Gastrocnemius medialis (tissue), 4 donors: ENCODE measurements at regions of chr11 and their contacts with region 1.

Region 1: GRCh38 chr11:117232092-117232878 is at the start of gene RNF214:
- DNase-seq: peak; percentile 64 to 74
- ATAC-seq: peak; percentile 91
- H3K4me3 ChIP-seq: peak within 1 kb of the TSS; percentile 89 to 100 (median 95)
- H3K27ac ChIP-seq: peak within 1 kb of the TSS; percentile 93 to 99 (median 96)
- H3K4me1 ChIP-seq: peaks cover 25 to 34% of the 10 kb centered on the region in 2 donors
- H3K27me3 ChIP-seq: no peaks in the 10 kb centered on the region
- CTCF ChIP-seq: peak; percentile 75 to 99 (median 99)
- POLR2A ChIP-seq: peak; percentile 93 to 95
- total RNA-seq, gene RNF214: 17.1 to 22.7 (median 19.9) TPM

Region 2: GRCh38 chr11:116772443-116773202 is 459.7 kb before region 1 on chr11 and contains the start of gene BUD13:
- in situ Hi-C with region 1: no loop called
- intact Hi-C with region 1: loop called (anchors 1 kb)
- DNase-seq: peak; percentile 80 to 84
- ATAC-seq: peak; percentile 90 to 95
- H3K4me3 ChIP-seq: peak within 1 kb of the TSS; percentile 71 to 98 (median 89)
- H3K27ac ChIP-seq: peak within 1 kb of the TSS; percentile 91 to 96 (median 95)
- H3K4me1 ChIP-seq: peaks cover 21 to 24% of the 10 kb centered on the region in 2 donors
- H3K27me3 ChIP-seq: no peaks in the 10 kb centered on the region
- CTCF ChIP-seq: no peak
- POLR2A ChIP-seq: peak; percentile 36 to 68
- total RNA-seq, gene BUD13: 9.0 to 14.1 (median 12.3) TPM

Region 3: DNA sequence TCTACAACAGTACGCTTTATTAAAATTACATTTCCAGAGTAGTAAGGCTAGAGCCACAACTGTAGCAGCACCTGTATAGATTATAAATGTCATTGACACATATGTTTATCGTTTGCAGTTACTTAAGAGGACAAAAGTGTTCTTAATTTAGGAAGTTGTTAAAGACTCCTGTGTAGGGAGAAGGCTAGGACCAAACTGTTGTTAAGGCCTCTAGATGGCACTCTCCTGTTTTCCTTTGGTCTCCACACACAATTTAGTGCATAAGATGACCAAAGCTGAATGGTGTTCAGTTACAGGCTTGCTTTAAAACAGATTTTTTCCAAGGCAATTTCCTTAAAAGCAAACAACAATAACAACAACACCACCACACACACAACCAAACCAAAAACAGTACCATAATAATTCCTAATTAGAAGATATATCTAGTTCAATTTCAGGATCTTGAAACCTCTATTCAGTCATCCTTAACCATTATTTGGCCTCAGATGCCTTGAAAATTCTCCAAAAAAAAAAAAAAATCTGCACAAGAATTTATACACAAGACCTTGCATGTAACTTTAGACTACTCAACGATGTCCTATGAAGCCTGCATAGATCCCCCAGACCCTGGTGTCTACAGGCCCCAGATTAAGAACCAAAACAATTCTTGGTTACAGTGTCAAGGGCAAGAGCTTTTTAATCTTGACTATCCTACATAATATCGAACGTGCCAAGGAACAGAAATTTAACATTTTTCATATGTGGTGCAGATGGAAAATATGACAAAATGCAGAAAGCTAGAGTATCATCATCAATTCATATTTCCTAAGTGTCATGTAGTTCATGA is 352.3 kb before region 1 on chr11:
- in situ Hi-C with region 1: loop called (anchors 10 to 25 kb)
- intact Hi-C with region 1: no loop called
- DNase-seq: no peak
- ATAC-seq: peak; percentile 46 to 78
- H3K4me3 ChIP-seq: no peak overlapping the region
- H3K27ac ChIP-seq: no peak overlapping the region
- H3K4me1 ChIP-seq: peaks cover 12 to 16% of the 10 kb centered on the region in 2 donors
- H3K27me3 ChIP-seq: no peaks in the 10 kb centered on the region
- CTCF ChIP-seq: peak; percentile 44 to 70 (median 51)
- POLR2A ChIP-seq: no peak

Region 4: GRCh38 chr11:116993599-116993998 is 238.7 kb before region 1 on chr11:
- in situ Hi-C with region 1: no loop called
- intact Hi-C with region 1: no loop called
- DNase-seq: no peak
- ATAC-seq: no peak
- H3K4me3 ChIP-seq: no peak overlapping the region
- H3K27ac ChIP-seq: no peak overlapping the region
- H3K4me1 ChIP-seq: peaks cover 33 to 36% of the 10 kb centered on the region in 2 donors
- H3K27me3 ChIP-seq: no peaks in the 10 kb centered on the region
- CTCF ChIP-seq: no peak
- POLR2A ChIP-seq: no peak

Region 5: DNA sequence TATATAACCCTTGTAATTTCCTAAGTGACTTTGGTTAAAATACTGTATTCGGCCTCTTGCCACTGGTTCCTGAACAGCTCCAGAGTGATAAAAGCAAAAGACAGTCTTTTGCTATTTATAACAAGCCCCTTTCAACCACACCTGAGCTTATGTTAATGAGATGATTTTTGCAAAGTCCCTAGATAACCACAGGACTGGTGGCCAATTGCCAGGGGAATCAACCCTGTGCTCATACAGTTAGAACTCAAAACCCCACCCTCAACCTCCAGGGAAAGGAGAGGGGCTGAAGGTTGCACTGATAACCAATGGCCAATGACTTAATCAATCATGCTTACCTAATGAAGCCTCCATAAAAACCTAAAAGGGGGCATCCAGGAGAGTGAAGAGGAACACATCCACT is 212.0 kb before region 1 on chr11:
- in situ Hi-C with region 1: no loop called
- intact Hi-C with region 1: no loop called
- DNase-seq: no peak
- ATAC-seq: no peak
- H3K4me3 ChIP-seq: no peak overlapping the region
- H3K27ac ChIP-seq: no peak overlapping the region
- H3K4me1 ChIP-seq: peaks cover 4 to 9% of the 10 kb centered on the region in 2 donors
- H3K27me3 ChIP-seq: no peaks in the 10 kb centered on the region
- CTCF ChIP-seq: no peak
- POLR2A ChIP-seq: no peak

Region 6: DNA sequence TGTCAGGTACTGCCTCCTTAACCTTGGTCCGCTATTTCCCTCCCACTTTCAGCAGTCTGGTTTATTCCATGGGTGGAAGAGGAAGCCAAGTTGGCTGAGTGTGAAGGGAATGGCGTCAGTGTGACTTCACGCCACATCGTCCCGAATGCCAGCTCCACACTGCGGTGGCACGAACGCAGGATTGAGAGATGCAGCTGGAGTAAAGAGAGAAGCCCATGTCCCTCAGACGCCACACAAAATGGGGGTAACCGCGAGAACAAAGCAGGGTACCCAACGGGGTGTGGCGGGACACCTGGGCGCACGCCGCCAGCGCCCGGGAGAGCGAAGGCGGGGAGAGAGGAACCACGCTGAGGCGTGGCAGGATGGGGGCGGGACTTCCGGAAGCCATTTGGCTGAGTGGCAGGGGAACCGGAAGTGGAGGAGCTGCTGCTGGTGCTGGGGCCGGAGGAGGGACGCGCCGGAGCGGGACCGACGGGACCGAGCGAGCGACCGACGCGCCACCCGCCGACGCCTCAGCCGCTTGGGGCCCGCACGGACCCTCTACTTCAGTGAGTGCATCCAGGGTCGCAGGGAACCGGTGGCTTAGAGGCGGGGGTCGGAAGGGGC is 88.3 kb before region 1 on chr11 and contains the start of gene PAFAH1B2:
- in situ Hi-C with region 1: no loop called
- intact Hi-C with region 1: loop called (anchors 1 kb)
- DNase-seq: peak; percentile 93 to 94
- ATAC-seq: peak; percentile 94 to 96
- H3K4me3 ChIP-seq: peak within 1 kb of the TSS; percentile 77 to 92 (median 82)
- H3K27ac ChIP-seq: peak within 1 kb of the TSS; percentile 84 to 97 (median 92)
- H3K4me1 ChIP-seq: peaks cover 30 to 33% of the 10 kb centered on the region in 2 donors
- H3K27me3 ChIP-seq: peaks cover 0 to 4% (median 0%) of the 10 kb centered on the region in 3 donors
- CTCF ChIP-seq: no peak
- POLR2A ChIP-seq: peak; percentile 87
- total RNA-seq, gene PAFAH1B2: 25.8 to 52.3 (median 35.2) TPM

Region 7: GRCh38 chr11:117178210-117179034 is 53.9 kb before region 1 on chr11 and contains the start of gene SIDT2:
- in situ Hi-C with region 1: loop called in 2 of 4 experiments (anchors 5 kb)
- intact Hi-C with region 1: loop called (anchors 2 kb)
- DNase-seq: peak; percentile 91 to 93
- ATAC-seq: peak; percentile 81 to 90
- H3K4me3 ChIP-seq: peak within 1 kb of the TSS; percentile 62 to 98 (median 74)
- H3K27ac ChIP-seq: peak within 1 kb of the TSS; percentile 88 to 99 (median 89)
- H3K4me1 ChIP-seq: peaks cover 26 to 33% of the 10 kb centered on the region in 2 donors
- H3K27me3 ChIP-seq: no peaks in the 10 kb centered on the region
- CTCF ChIP-seq: peak in 1 of 5 experiments; percentile 26
- POLR2A ChIP-seq: peak; percentile 84 to 95
- total RNA-seq, gene SIDT2: 14.3 to 33.9 (median 17.7) TPM

Region 8: GRCh38 chr11:117327567-117328374 is 95.5 kb after region 1 on chr11 and contains the start of gene CEP164:
- in situ Hi-C with region 1: no loop called
- intact Hi-C with region 1: loop called (anchors 1 kb)
- DNase-seq: peak; percentile 94 to 95
- ATAC-seq: peak; percentile 98 to 99
- H3K4me3 ChIP-seq: peak within 1 kb of the TSS; percentile 66 to 90 (median 77)
- H3K27ac ChIP-seq: peak within 1 kb of the TSS; percentile 85 to 91 (median 86)
- H3K4me1 ChIP-seq: peaks cover 9% of the 10 kb centered on the region in 2 donors
- H3K27me3 ChIP-seq: no peaks in the 10 kb centered on the region
- CTCF ChIP-seq: no peak
- POLR2A ChIP-seq: peak; percentile 42 to 63
- total RNA-seq, gene CEP164: 3.4 to 9.2 (median 5.8) TPM